ENCODE measurements at regions of chr2 and their contacts with region 1.

Region 1: GRCh38 chr2:131492418-131493198 is 411 bp upstream of the MZT2A start:
- DNase-seq: peak; percentile 98
- ATAC-seq: peak; percentile 84
- H3K4me3 ChIP-seq: peak overlapping the region; percentile 25 to 98 (median 84)
- H3K4me3 Mint-ChIP-seq: peak overlapping the region; percentile 94
- H3K27ac ChIP-seq: peak overlapping the region; percentile 80 to 94
- H3K27ac Mint-ChIP-seq: peak overlapping the region; percentile 97
- H3K4me1 ChIP-seq: peaks cover 24 to 29% of the 10 kb centered on the region in 2 donors
- H3K4me1 Mint-ChIP-seq: peaks cover 29% of the 10 kb centered on the region
- H3K27me3 ChIP-seq: no peaks in the 10 kb centered on the region
- H3K27me3 Mint-ChIP-seq: no peaks in the 10 kb centered on the region
- CTCF ChIP-seq: peak; percentile 87

Region 2: DNA sequence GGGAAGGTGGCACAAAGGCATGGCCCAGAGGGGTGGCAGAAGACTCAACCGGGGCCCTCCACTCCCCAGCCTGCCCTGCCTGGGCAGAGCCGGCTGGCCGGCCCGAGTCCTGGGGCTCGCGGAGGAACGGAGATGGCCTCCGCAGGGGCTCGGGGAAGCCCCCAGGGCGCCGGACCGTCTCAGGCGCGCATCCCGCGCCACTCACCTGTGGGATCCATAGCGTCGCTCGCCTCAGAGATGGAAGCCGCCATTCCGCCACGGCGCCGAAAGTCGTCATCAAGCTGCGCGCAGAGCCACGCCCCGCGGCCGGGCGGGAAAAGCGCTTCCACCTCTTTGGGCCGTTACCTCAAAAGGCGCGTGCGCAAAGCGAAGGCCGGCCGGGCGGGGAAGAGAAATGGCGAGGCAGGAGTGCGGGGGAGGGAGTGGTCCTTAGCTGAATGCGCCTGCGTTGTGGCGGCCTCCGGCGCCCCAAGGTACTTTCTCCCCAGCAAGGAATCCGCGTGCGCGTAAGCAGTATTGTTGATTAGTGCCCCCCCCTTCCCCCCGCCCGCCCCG is 1311.2 kb before region 1 on chr2 and contains the start of gene SMPD4:
- CTCF ChIA-PET with region 1: no interaction called
- POLR2A ChIA-PET with region 1: no interaction called
- intact Hi-C with region 1: loop called (anchors 2 kb)
- DNase-seq: peak; percentile 98
- ATAC-seq: peak; percentile 72
- H3K4me3 ChIP-seq: peak within 1 kb of the TSS; percentile 38 to 90 (median 80)
- H3K4me3 Mint-ChIP-seq: peak within 1 kb of the TSS; percentile 92
- H3K27ac ChIP-seq: peak within 1 kb of the TSS; percentile 85 to 91
- H3K27ac Mint-ChIP-seq: peak within 1 kb of the TSS; percentile 97
- H3K4me1 ChIP-seq: peaks cover 14 to 21% of the 10 kb centered on the region in 2 donors
- H3K4me1 Mint-ChIP-seq: peaks cover 24% of the 10 kb centered on the region
- H3K27me3 ChIP-seq: no peaks in the 10 kb centered on the region
- H3K27me3 Mint-ChIP-seq: no peaks in the 10 kb centered on the region
- CTCF ChIP-seq: no peak
- total RNA-seq, gene SMPD4: 63.8 and 67.5 TPM in 2 replicates

Region 3: DNA sequence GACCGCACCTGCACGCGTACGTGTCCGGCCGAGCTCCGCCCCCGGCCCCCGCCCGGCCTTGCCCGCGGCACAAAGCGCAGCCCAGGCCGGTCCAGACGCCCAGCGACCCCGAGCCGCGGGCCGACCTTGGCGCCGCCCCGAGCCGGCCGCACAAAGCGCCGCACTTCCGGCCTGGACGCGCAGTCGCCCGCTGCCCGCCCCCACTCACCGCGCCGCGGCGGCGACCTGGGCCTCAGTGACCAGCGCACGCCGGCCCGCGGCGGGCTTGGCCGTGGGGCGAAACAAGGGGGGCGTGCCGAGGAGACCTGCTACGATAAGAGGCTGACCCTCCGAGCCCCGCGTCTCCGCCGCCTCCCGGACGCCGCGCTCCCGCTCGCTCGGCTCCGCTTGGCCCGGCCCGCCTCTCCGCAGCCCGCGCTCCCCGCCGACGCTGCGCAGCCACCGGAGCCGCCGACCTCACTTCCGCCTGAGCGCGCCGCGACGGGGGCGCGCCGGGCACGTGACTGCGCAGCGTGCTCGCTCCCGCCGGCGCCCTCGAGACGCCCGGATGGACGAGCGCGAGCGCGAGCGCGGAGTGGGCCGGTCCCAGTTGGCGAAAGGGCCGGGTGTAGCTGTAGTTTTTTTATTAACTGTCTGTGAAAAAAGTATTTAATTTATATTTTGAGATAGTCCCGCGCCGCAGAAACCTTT is 399.5 kb before region 1 on chr2 and contains the start of gene FAM168B:
- CTCF ChIA-PET with region 1: no interaction called
- POLR2A ChIA-PET with region 1: interaction called, 3 read pairs
- intact Hi-C with region 1: loop called (anchors 5 kb)
- DNase-seq: peak; percentile 93
- ATAC-seq: peak; percentile 76
- H3K4me3 ChIP-seq: peak within 1 kb of the TSS; percentile 67 to 99 (median 80)
- H3K4me3 Mint-ChIP-seq: peak within 1 kb of the TSS; percentile 94
- H3K27ac ChIP-seq: peak within 1 kb of the TSS; percentile 71 to 92
- H3K27ac Mint-ChIP-seq: peak within 1 kb of the TSS; percentile 93
- H3K4me1 ChIP-seq: peaks cover 7 to 16% of the 10 kb centered on the region in 2 donors
- H3K4me1 Mint-ChIP-seq: peaks cover 18% of the 10 kb centered on the region
- H3K27me3 ChIP-seq: no peaks in the 10 kb centered on the region
- H3K27me3 Mint-ChIP-seq: no peaks in the 10 kb centered on the region
- CTCF ChIP-seq: no peak
- total RNA-seq, gene FAM168B: 69.1 and 70.5 TPM in 2 replicates

Region 4: DNA sequence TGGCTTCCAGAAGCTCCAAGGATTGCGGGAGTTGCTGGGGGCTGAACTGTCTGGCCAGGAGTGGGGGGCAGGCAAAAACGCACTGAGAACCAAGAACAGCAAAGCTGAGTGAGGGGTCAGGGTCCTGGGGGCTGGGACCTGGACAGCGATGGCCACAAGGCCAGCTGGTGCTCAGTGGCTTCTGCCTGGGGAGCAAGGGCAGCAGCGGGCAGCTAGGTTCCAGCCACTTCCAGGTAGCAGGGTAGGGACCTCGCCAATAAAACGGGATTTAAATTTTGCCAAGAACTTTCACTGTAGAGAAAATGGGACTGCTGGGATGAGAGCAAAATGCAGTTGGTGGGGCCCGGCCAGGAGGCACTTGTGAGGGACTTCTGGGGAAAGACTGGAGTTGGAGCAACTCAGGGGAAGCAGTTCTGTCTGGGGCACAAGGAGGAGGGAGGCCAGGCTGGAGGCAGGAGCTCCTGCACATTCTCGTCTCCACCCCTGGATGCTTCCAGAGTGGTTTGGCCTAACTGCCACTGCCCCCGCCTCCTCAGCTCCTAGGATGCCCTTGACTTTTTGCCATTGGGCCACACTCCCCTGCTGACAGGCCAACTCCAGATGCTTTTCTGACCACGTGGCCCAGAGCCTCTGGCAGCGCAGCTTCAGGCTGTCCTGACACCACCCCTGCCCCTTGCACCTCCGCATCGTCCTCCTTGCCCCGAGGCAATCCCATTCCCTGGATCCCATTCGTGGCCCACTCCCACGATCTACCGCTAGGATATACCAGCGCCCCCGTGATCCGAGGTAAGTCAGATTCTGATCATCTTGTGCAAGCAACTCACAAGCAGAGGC is 29.6 kb after region 1 on chr2:
- CTCF ChIA-PET with region 1: interaction called, 4 read pairs
- POLR2A ChIA-PET with region 1: no interaction called
- intact Hi-C with region 1: loop called (anchors 1 kb)
- DNase-seq: no peak
- ATAC-seq: no peak
- H3K4me3 ChIP-seq: no peak overlapping the region
- H3K4me3 Mint-ChIP-seq: no peak overlapping the region
- H3K27ac ChIP-seq: no peak overlapping the region
- H3K27ac Mint-ChIP-seq: no peak overlapping the region
- H3K4me1 ChIP-seq: peaks cover 0 to 1% of the 10 kb centered on the region in 2 donors
- H3K4me1 Mint-ChIP-seq: no peaks in the 10 kb centered on the region
- H3K27me3 ChIP-seq: no peaks in the 10 kb centered on the region
- H3K27me3 Mint-ChIP-seq: no peaks in the 10 kb centered on the region
- CTCF ChIP-seq: no peak

Region 5: DNA sequence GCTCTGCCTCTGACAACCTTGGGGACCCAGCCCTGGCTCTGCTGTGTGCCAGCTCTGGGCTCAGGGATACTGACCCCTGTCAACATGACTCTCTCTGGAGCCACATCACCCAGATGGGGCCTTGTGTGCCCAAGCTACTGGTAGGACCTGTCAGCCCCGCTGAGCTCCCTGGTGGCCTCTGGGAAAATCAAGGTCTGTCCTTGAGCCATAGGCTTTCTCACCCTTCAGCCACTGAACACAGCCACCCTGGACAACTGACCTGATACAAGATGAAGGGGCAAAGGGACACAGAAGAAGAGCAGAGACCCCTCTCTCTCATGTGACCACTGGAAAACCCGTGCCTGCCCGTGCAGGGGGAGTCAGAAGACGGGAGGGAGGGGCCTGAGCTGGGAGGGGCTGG is 42.9 kb after region 1 on chr2:
- CTCF ChIA-PET with region 1: no interaction called
- POLR2A ChIA-PET with region 1: no interaction called
- intact Hi-C with region 1: no loop called
- DNase-seq: no peak
- ATAC-seq: no peak
- H3K4me3 ChIP-seq: no peak overlapping the region
- H3K4me3 Mint-ChIP-seq: no peak overlapping the region
- H3K27ac ChIP-seq: no peak overlapping the region
- H3K27ac Mint-ChIP-seq: no peak overlapping the region
- H3K4me1 ChIP-seq: no peaks in the 10 kb centered on the region
- H3K4me1 Mint-ChIP-seq: no peaks in the 10 kb centered on the region
- H3K27me3 ChIP-seq: no peaks in the 10 kb centered on the region
- H3K27me3 Mint-ChIP-seq: no peaks in the 10 kb centered on the region
- CTCF ChIP-seq: no peak

Region 6: DNA sequence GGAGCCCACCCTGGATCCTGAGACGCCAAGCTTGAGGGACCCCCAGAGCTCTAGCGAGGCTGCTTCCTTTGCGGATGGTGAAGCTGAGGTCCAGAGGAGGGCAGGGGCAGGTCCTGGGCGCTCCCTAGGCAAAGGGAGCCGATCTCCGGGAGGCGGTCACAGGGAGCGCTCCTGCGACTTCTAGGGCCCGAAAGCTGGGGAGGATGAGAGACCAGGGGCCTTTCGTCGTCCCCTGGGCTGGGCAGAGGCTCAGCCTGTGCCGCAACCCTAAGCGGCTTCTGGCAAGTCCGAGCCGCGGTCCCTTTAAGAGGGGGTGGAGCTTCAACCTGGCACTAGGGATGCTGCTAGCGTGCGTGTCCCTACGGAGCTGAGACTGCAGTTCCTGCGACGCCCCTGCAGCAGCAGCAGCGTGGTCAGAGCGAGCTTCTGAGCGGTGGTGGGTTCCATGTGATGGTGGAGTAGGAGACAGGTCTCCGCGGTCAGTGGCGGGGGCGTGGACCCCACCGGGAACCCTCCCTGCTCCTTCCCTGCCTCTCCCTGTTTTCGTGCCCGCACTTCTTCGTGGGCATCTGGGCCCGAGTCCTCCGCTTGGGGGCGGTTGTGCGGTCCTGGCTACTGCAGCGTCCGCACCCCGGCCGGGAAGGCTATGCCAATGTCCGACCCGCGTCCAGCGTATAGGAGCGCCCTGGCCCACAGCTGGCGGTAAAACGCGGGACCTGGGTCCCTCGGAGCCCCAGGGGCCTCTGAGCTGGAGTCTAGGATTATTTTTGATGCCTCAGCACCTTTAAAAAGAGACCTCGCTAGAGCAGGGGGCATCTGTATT is 189.7 kb after region 1 on chr2:
- CTCF ChIA-PET with region 1: no interaction called
- POLR2A ChIA-PET with region 1: interaction called, 12 read pairs
- intact Hi-C with region 1: no loop called
- DNase-seq: peak; percentile 79
- ATAC-seq: peak; percentile 98
- H3K4me3 ChIP-seq: peak overlapping the region in 4 of 5 experiments; percentile 54 to 80 (median 72)
- H3K4me3 Mint-ChIP-seq: peak overlapping the region; percentile 94
- H3K27ac ChIP-seq: peak overlapping the region in 1 of 2 donors; percentile 66
- H3K27ac Mint-ChIP-seq: peak overlapping the region; percentile 89
- H3K4me1 ChIP-seq: peaks cover 4 to 16% of the 10 kb centered on the region in 2 donors
- H3K4me1 Mint-ChIP-seq: peaks cover 26% of the 10 kb centered on the region
- H3K27me3 ChIP-seq: peaks cover 0 to 20% (median 0%) of the 10 kb centered on the region in 4 experiments
- H3K27me3 Mint-ChIP-seq: no peaks in the 10 kb centered on the region
- CTCF ChIP-seq: no peak